AG04449 (cell line): ENCODE measurements at regions of chr3 and their contacts with region 1.

Region 1: DNA sequence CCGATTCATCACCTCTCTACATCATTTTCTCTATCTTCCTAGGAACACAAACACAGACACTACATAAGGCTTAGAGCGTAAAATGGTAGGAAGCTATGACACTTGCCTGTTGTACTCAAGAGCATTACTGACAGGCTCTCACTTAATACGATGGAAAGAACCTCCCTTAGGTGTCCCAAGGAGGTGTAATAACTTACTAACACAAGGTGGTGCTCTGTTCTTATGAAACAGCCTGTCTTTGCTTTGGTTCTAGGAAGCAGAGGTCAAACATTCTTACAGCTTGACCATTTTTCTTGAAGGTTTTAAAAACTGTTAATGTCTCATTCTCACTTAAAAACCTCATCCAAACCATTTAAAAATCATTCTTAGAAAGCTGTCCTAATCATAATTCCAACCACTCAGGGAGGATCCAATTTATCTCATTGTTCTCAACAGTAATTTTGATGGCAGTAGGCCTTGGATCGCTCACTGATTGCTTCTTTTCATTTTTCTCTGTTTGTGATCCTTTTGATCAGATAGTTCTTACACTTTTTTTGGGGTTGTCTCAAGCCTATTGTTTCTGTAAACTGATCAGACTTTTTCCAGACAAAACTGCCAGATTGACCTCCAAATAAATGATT is 317.8 kb upstream of the AGTR1 start:
- DNase-seq: peak; percentile 14
- H3K4me3 ChIP-seq: no peak overlapping the region
- CTCF ChIP-seq: peak; percentile 48

Region 2: DNA sequence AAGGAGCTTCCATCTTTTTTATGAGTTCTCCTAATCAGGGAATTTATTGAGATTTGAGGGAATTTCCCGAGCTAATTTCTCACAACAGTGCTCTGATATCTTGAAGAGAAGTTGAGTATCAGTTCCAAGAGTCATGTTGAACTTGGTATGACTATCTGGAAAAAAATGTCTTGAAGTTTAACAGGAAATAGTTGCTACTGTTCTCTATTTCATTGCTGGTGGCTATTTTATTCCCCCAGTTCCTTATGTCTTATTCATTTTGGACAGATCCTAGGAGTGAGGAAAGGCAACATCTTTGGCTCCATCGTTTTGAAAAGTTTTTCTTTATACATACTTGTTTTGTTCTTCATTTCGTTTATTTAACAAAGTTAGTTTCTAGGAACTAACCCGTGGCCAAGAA is 10.0 kb after region 1 on chr3:
- CTCF ChIA-PET with region 1: interaction called, 29 read pairs
- POLR2A ChIA-PET with region 1: no interaction called
- DNase-seq: no peak
- H3K4me3 ChIP-seq: no peak overlapping the region
- CTCF ChIP-seq: no peak

Region 3: DNA sequence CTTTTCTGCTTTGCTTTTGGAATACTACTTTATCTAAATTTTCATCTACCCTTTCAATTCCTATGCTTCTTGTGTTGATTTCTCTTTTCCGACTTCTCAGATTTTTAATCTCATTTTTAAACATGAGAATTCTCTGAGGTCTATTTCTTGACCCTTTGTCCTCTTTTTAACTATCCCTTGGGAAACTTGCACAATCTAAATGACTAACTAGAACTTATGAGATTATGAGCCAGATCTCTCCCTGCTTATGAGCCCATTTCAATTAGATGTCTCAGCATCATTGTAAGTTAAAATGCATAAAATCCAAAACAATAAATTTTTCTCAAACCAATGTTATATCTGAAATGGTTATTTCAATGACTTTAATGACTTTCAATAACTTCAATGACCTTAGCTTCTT is 20.9 kb after region 1 on chr3:
- CTCF ChIA-PET with region 1: interaction called, 10 read pairs
- POLR2A ChIA-PET with region 1: no interaction called
- DNase-seq: no peak
- H3K4me3 ChIP-seq: no peak overlapping the region
- CTCF ChIP-seq: no peak

Region 4: GRCh38 chr3:148718982-148719862 is 339.3 kb after region 1 on chr3:
- CTCF ChIA-PET with region 1: interaction called, 118 read pairs
- POLR2A ChIA-PET with region 1: no interaction called
- DNase-seq: no peak
- H3K4me3 ChIP-seq: no peak overlapping the region
- CTCF ChIP-seq: peak; percentile 13

Region 5: GRCh38 chr3:148727247-148727646 is 347.4 kb after region 1 on chr3:
- CTCF ChIA-PET with region 1: interaction called, 118 read pairs
- POLR2A ChIA-PET with region 1: no interaction called
- DNase-seq: no peak
- H3K4me3 ChIP-seq: no peak overlapping the region
- CTCF ChIP-seq: peak; percentile 60

Region 6: DNA sequence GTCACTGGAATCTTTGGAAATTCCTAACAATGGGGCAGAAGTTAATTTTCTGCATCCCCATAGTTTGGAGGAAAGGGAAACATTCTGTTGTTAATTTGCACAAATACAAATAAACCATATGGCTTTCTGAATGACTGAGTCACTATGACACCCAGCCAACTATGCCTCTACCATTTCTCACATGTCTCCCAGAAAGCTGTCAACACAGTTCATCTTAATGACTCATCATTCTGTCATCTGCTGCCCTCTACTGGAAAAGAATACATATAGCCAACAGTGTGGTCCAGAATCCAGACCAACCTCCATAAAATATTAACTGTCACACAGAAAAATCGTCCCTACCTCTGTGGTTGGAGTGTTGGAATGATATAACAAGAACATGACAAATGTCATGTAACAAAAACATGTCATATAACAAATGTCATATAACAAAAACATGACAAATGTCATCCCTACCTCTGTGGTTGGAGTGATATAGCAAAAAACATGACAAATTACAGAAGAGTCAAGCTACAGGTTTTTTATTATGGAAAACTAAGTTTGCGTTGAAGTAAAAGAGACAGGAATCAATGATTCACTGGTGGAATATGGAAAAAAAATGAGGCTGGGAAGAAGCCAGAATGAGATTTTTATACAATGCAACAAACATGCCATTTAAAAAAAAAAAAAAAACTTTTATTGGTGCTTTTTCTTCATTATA is 563.8 kb after region 1 on chr3:
- CTCF ChIA-PET with region 1: interaction called, 164 read pairs
- POLR2A ChIA-PET with region 1: no interaction called
- DNase-seq: peak; percentile 69
- H3K4me3 ChIP-seq: no peak overlapping the region
- CTCF ChIP-seq: peak; percentile 50